Heart left ventricle (tissue), 16 donors: ENCODE measurements at regions of chr10 and their contacts with region 1.

Region 1: DNA sequence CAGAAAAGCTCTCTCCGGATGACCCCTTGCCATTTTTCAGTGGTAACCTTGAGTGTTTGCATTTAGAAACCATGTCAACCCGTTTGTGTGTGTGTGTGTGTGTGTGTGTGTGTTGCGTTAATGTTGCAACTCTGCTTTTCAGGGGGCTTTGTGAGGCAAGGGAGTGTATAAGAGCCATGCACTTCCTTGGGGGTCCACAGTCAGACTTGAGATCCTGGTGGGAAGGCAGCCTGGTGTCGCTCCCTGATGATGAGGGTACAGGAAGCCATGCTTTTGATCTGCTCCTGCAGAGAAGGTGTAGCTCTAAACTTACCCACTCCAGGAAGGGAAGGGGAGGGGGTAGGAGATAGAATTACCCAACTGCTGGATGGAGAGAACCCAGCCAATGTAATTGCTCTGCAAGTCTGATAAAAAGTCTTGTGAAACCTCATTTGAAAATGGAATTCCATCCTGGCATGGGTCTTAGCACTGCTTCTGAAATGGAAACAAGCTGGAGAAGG is 10.7 kb downstream of the GRK5 start:
- DNase-seq: no peak
- ATAC-seq: peak; percentile 5 to 69 (median 41)
- H3K4me3 ChIP-seq: no peak overlapping the region
- H3K27ac ChIP-seq: peak overlapping the region in 3 of 12 donors; percentile 5 to 46 (median 31)
- H3K4me1 ChIP-seq: peaks cover 4 to 94% (median 78%) of the 10 kb centered on the region in 12 donors
- H3K27me3 ChIP-seq: no peaks in the 10 kb centered on the region
- CTCF ChIP-seq: no peak
- POLR2A ChIP-seq: no peak

Region 2: DNA sequence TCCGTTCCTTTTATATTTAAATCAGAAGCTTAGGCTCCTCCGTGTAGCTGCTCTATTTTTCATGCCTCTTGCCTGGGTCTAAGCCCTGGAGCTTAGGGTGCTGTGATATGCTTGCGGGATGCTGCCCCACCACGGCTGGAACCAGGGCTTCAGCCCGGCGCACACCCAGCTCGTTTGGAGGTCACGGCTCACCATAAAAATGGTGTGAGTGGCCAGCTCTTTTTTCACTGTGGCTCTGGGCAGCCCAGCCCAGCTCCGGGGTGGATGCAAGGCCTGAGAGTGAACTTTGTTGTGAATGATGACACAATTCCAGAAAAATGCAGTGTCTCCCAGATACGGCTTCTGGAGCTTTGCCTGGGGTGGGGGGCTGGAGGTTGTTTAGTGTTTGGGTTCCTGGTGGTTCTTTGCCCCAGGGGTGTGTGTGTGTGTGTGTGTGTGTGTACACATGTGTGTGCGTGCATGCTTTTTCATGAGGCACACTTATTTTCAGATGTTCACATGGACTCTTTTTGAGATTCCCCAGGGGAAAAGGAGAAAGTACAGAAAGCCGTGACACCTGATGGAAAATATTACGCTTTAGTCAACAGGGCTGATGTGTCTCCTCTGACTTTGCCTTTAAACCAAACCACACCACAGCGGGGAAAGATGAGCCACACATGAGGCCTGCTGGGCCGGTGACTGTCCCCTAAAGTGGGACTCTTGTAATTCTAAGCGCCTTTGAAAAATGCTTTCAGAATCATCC is 35.6 kb after region 1 on chr10:
- intact Hi-C with region 1: loop called in 2 of 10 experiments (anchors 5 kb)
- DNase-seq: peak; percentile 67 to 84 (median 78)
- ATAC-seq: peak; percentile 64 to 74 (median 70)
- H3K4me3 ChIP-seq: peak overlapping the region in 2 of 12 donors; percentile 7 to 19
- H3K27ac ChIP-seq: peak overlapping the region; percentile 67 to 94 (median 82)
- H3K4me1 ChIP-seq: peaks cover 18 to 85% (median 64%) of the 10 kb centered on the region in 12 donors
- H3K27me3 ChIP-seq: no peaks in the 10 kb centered on the region
- CTCF ChIP-seq: peak in 2 of 12 donors; percentile 7 to 27
- POLR2A ChIP-seq: no peak

Region 3: GRCh38 chr10:119289227-119289920 is 71.3 kb after region 1 on chr10:
- intact Hi-C with region 1: loop called in 1 of 10 experiments (anchors 5 kb)
- DNase-seq: peak in 2 of 5 donors; percentile 30 to 54
- ATAC-seq: peak in 1 of 4 donors; percentile 38
- H3K4me3 ChIP-seq: no peak overlapping the region
- H3K27ac ChIP-seq: peak overlapping the region; percentile 35 to 82 (median 58)
- H3K4me1 ChIP-seq: peaks cover 29 to 90% (median 67%) of the 10 kb centered on the region in 12 donors
- H3K27me3 ChIP-seq: no peaks in the 10 kb centered on the region
- CTCF ChIP-seq: no peak
- POLR2A ChIP-seq: no peak